ENCODE measurements at regions of chr11 and their contacts with region 1.

Region 1: GRCh38 chr11:62855571-62856332 is 16.4 kb upstream of the WDR74 start:
- DNase-seq: peak; percentile 96
- ATAC-seq: peak; percentile 80
- H3K4me3 ChIP-seq: peak overlapping the region; percentile 74 to 83
- H3K27ac ChIP-seq: peak overlapping the region; percentile 85
- H3K4me1 ChIP-seq: peaks cover 38 to 60% of the 10 kb centered on the region in 2 experiments
- H3K27me3 ChIP-seq: no peaks in the 10 kb centered on the region
- CTCF ChIP-seq: no peak
- POLR2A ChIP-seq: peak; percentile 100
- RAD21 ChIP-seq: no peak

Region 2: GRCh38 chr11:62753736-62754603 is 101.8 kb before region 1 on chr11 and contains the start of gene ZBTB3:
- CTCF ChIA-PET with region 1: no interaction called
- POLR2A ChIA-PET with region 1: interaction called, 12 read pairs
- RAD21 ChIA-PET with region 1: no interaction called
- intact Hi-C with region 1: no loop called
- DNase-seq: peak; percentile 99
- ATAC-seq: peak; percentile 96
- H3K4me3 ChIP-seq: peak within 1 kb of the TSS; percentile 70 to 84
- H3K27ac ChIP-seq: peak within 1 kb of the TSS; percentile 76
- H3K4me1 ChIP-seq: peaks cover 4 to 18% of the 10 kb centered on the region in 2 experiments; a peak in 3 of 4 replicates
- H3K27me3 ChIP-seq: no peaks in the 10 kb centered on the region
- CTCF ChIP-seq: no peak
- POLR2A ChIP-seq: peak; percentile 86
- RAD21 ChIP-seq: no peak
- total RNA-seq, gene ZBTB3: 11.3 TPM

Region 3: GRCh38 chr11:62804310-62805075 is 51.3 kb before region 1 on chr11:
- CTCF ChIA-PET with region 1: no interaction called
- POLR2A ChIA-PET with region 1: no interaction called
- RAD21 ChIA-PET with region 1: no interaction called
- intact Hi-C with region 1: no loop called
- DNase-seq: no peak
- ATAC-seq: peak; percentile 23
- H3K4me3 ChIP-seq: peak overlapping the region; percentile 68 to 79
- H3K27ac ChIP-seq: peak overlapping the region; percentile 85
- H3K4me1 ChIP-seq: peaks cover 0 to 21% of the 10 kb centered on the region in 2 experiments; a peak in 3 of 4 replicates
- H3K27me3 ChIP-seq: no peaks in the 10 kb centered on the region
- CTCF ChIP-seq: no peak
- POLR2A ChIP-seq: no peak
- RAD21 ChIP-seq: no peak

Region 4: DNA sequence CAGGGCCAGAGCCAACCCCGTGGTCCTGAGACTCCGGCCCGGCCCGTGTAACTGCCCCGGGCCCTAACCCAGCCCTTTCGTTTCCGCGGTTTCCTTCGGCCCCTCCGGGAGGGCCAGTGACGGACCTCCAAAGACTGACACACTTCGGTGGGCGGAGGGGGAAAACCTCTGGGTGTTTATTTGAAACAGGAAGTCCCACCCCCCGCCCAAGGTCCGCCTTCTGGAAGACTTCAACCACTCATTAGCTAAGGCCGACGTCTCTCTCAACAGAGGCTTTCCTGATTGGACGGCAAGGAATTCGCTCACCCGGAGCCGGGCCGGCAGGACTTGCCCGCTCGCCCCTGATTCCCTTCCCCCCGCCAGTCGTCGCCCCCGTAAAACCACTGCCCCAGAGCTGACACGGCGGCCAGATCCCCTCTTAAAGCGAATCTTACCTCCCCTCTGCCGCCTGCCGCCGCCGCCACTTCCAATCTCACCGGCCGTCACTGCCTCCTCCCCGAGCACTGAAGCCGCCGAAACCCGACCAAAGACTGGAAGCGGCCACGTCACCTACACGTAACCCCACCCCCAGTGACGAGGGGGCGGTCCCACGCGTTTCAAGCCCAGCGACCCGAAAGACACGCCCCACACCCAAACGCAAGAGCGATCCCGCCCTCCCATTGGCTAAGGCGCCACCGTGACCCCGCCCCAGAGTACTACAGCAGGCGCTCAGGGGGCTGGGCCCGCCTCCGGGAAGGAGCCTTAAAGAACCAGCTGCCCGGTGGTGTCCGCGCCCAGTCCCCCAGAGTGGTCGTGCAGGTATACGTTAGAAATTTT is 24.0 kb before region 1 on chr11 and contains the start of gene STX5:
- CTCF ChIA-PET with region 1: interaction called, 4 read pairs
- POLR2A ChIA-PET with region 1: interaction called, 17 read pairs
- RAD21 ChIA-PET with region 1: no interaction called
- intact Hi-C with region 1: no loop called
- DNase-seq: peak; percentile 97
- ATAC-seq: peak; percentile 89
- H3K4me3 ChIP-seq: peak within 1 kb of the TSS; percentile 86 to 93
- H3K27ac ChIP-seq: peak within 1 kb of the TSS; percentile 64
- H3K4me1 ChIP-seq: peaks cover 7 to 30% of the 10 kb centered on the region in 2 experiments
- H3K27me3 ChIP-seq: no peaks in the 10 kb centered on the region
- CTCF ChIP-seq: no peak
- POLR2A ChIP-seq: peak; percentile 18
- RAD21 ChIP-seq: no peak
- total RNA-seq, gene STX5: 29.5 TPM

Region 5: DNA sequence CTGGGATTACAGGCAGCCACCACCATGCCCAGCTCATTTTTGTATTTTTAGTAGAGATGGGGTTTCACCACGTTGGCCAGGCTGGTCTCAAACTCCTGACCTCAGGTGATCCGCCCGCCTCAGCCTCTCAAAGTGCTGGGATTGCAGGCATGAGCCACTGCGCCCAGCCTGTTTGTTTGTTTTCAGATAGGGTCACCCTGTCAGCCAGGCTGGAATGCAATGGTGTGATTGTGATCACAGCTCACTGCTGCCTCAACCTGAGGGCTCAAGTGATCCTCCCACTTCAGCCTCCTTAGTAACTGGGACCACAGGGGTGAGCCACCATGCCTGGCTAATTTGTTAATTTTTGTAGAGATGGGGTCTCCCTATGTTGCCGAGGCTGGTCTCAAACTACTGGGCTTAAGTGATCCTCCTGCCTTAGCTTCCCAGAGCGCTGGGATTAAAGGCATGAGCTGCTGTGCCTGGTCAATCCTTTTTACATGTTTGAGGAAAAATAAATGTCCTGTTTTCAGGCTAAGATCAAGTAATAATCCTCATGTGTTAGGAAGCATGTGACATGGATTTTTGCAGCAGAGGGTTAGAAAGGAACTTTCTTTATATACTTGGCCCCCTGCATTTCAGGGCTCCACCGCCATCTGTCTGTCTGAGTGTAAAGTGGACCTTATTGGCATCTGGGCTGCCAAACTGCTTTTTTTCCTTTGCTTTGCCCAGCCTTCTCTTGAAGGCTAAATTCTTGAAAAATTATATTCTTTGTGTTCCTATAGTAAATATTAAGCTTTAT is 20.1 kb after region 1 on chr11:
- CTCF ChIA-PET with region 1: interaction called, 5 read pairs
- POLR2A ChIA-PET with region 1: interaction called, 46 read pairs
- RAD21 ChIA-PET with region 1: no interaction called
- intact Hi-C with region 1: no loop called
- DNase-seq: no peak
- ATAC-seq: no peak
- H3K4me3 ChIP-seq: no peak overlapping the region
- H3K27ac ChIP-seq: peak overlapping the region; percentile 26
- H3K4me1 ChIP-seq: peaks cover 18 to 35% of the 10 kb centered on the region in 2 experiments
- H3K27me3 ChIP-seq: no peaks in the 10 kb centered on the region
- CTCF ChIP-seq: no peak
- POLR2A ChIP-seq: no peak
- RAD21 ChIP-seq: no peak

Region 6: GRCh38 chr11:62880803-62881578 is 25.2 kb after region 1 on chr11 and contains the start of gene SLC3A2:
- CTCF ChIA-PET with region 1: interaction called, 5 read pairs
- POLR2A ChIA-PET with region 1: interaction called, 46 read pairs
- RAD21 ChIA-PET with region 1: no interaction called
- intact Hi-C with region 1: no loop called
- DNase-seq: peak; percentile 68
- ATAC-seq: peak; percentile 87
- H3K4me3 ChIP-seq: peak within 1 kb of the TSS; percentile 75 to 85
- H3K27ac ChIP-seq: peak within 1 kb of the TSS; percentile 96
- H3K4me1 ChIP-seq: peaks cover 38 to 74% of the 10 kb centered on the region in 2 experiments
- H3K27me3 ChIP-seq: no peaks in the 10 kb centered on the region
- CTCF ChIP-seq: peak in 2 of 3 experiments; percentile 47 to 52; a peak in 4 of 6 replicates
- POLR2A ChIP-seq: peak; percentile 98
- RAD21 ChIP-seq: no peak
- total RNA-seq, gene SLC3A2: 418 TPM

Measured in HCT116 (cell line).